Left cardiac atrium (tissue), 4 donors: ENCODE measurements at regions of chr6 and their contacts with region 1.

Region 1: GRCh38 chr6:146857180-146857979 is 258.6 kb downstream of the ADGB start:
- DNase-seq: peak; percentile 89
- ATAC-seq: peak; percentile 98

Region 2: GRCh38 chr6:146787876-146788508 is 69.4 kb before region 1 on chr6:
- intact Hi-C with region 1: no loop called
- DNase-seq: no peak
- ATAC-seq: no peak

Region 3: DNA sequence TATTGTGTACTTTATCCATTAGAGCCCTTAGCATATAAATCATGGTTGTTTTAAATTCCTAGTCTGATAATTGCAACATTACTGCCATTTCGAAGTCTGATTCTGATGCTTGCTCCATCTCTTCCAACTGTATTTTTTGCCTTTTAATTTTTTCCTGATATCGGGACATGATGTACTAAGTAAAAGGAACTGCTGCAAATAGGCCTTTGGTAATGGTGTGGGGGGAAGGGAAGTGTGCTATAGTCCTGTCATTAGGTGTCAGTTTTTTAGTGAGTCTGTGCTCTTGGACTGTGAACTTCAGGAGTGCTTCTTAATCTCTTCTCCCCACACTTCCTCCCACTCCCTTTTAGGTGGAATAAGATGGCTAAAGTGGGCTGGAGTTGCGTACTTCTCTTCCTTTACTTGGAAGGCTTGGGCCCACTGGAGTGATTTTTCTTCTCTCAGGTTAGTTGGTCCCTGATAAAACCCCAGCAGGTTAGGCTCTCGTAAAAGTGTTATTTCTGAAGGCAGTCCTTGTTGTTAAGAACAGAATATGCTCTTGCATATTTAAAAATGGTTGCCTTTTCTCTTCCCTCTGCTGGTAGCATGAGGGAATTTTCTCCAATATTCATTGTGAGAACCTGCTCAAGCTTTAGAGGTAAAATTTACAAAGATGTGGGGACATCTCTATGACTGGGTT is 364.9 kb after region 1 on chr6:
- intact Hi-C with region 1: loop called in 1 of 2 experiments (anchors 5 kb)
- DNase-seq: no peak
- ATAC-seq: peak in 1 of 2 donors; percentile 68

Region 4: DNA sequence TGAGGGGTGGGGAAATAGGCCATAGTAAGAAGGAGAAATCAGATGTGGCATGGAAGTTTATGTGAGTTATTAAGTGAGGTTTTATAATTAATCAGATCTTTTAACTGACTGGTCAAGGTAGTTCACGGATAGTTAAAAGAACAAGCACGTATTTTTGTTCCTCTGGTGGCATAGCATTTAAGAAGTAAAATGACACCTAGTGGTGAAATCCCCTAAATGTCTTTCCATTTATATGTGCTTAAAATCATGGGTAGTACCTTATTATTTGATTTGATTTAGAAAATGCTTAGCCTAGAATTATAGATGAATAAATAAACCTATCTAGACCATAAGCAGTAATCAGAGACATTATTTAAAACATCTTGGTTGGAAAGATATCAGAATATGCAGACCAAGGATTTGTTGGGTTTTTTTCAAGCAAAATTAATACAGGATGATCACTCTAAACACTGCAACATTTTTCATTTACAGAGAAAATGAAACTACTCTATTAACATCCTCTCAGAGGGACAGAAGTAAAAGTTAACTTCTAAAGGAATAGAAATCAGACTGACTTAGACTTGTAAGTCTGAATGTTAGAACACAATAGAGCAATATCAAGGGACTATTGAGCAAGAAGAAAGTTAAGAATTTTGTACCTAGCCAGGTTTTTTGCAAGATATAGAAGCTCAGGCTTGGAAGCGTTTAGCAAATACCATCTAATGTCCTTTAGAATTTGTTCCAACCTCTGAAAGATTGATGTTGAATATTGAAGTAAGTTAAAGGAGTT is 427.9 kb after region 1 on chr6:
- intact Hi-C with region 1: loop called in 1 of 2 experiments (anchors 1 kb)
- DNase-seq: no peak
- ATAC-seq: no peak